Spleen (tissue), 13 donors: ENCODE measurements at regions of chr16 and their contacts with region 1.

Region 1: GRCh38 chr16:87636072-87636684 is 33.9 kb downstream of the JPH3 start:
- DNase-seq: peak; percentile 93
- H3K4me3 ChIP-seq: peak overlapping the region in 7 of 8 donors; percentile 22 to 65 (median 35)
- H3K27ac ChIP-seq: peak overlapping the region in 4 of 8 donors; percentile 27 to 54 (median 43)
- H3K4me1 ChIP-seq: peaks cover 16 to 22% (median 19%) of the 10 kb centered on the region in 6 donors
- H3K27me3 ChIP-seq: peaks cover 0 to 77% (median 0%) of the 10 kb centered on the region in 7 donors
- CTCF ChIP-seq: peak; percentile 27 to 78 (median 63)
- POLR2A ChIP-seq: no peak

Region 2: GRCh38 chr16:87416826-87417527 is 219.2 kb before region 1 on chr16:
- intact Hi-C with region 1: loop called (anchors 5 kb)
- DNase-seq: no peak
- H3K4me3 ChIP-seq: no peak overlapping the region
- H3K27ac ChIP-seq: no peak overlapping the region
- H3K4me1 ChIP-seq: no peaks in the 10 kb centered on the region
- H3K27me3 ChIP-seq: no peaks in the 10 kb centered on the region
- CTCF ChIP-seq: peak in 8 of 11 experiments; percentile 30 to 58 (median 42)
- POLR2A ChIP-seq: no peak

Region 3: GRCh38 chr16:87492721-87493607 is 143.2 kb before region 1 on chr16 and contains the start of gene ZCCHC14:
- intact Hi-C with region 1: no loop called
- DNase-seq: peak; percentile 98
- H3K4me3 ChIP-seq: peak within 1 kb of the TSS; percentile 15 to 79 (median 50)
- H3K27ac ChIP-seq: peak within 1 kb of the TSS in 6 of 8 donors; percentile 58 to 88 (median 79)
- H3K4me1 ChIP-seq: peaks cover 19 to 80% (median 61%) of the 10 kb centered on the region in 6 donors
- H3K27me3 ChIP-seq: peaks cover 0 to 55% (median 0%) of the 10 kb centered on the region in 7 donors
- CTCF ChIP-seq: peak in 5 of 11 experiments; percentile 13 to 45 (median 19)
- POLR2A ChIP-seq: peak in 1 of 3 donors; percentile 71
- total RNA-seq, gene ZCCHC14: 11.4 to 18.3 (median 14.2) TPM